Ovary (tissue), 10 donors: ENCODE measurements at regions of chr3 and their contacts with region 1.

Region 1: GRCh38 chr3:64685800-64686445 is 1.9 kb downstream of the ADAMTS9 start:
- DNase-seq: peak; percentile 97 to 98 (median 97)
- H3K4me3 ChIP-seq: peak overlapping the region; percentile 72
- H3K27ac ChIP-seq: peak overlapping the region; percentile 98 to 99
- H3K4me1 ChIP-seq: peaks cover 7% of the 10 kb centered on the region
- H3K27me3 ChIP-seq: no peaks in the 10 kb centered on the region
- CTCF ChIP-seq: peak; percentile 17 to 38 (median 27)
- EP300 ChIP-seq: no peak
- POLR2A ChIP-seq: peak; percentile 88

Region 2: DNA sequence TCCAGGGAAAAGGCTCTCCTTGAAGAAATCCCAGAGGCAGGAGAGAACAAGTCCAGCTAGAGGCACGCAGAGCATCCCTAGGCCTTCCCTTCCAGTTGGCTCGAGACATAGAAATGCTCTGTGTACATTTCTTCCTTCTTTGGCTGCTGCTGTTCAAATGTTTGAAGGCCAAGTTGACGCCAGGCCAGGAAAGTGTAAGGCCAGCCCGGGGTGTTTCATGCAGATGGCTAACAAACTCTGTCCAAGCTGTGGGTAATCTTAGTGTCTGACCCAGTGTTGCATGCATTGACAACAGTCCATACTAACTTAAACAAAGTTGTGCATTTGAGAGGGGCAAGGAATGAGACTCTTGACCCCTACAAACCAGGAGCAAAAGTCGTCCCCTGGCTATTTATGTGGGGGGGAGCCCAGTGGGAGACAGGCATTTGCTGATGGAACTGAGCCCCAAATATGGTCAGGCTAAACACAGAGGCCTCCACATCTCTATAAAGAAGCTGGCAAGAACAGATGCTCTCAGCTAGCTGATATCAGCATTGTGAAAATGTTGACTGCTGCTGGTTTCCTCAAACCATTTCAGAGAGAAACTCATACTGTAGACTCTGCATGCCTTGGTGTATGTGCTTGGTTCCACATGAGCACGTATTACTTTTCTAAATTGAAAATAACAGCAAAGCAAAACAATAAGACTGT is 137.6 kb before region 1 on chr3:
- intact Hi-C with region 1: loop called in 1 of 4 experiments (anchors 5 kb)
- DNase-seq: peak; percentile 79 to 89 (median 86)
- H3K4me3 ChIP-seq: no peak overlapping the region
- H3K27ac ChIP-seq: peak overlapping the region in 1 of 2 donors; percentile 59
- H3K4me1 ChIP-seq: peaks cover 8% of the 10 kb centered on the region
- H3K27me3 ChIP-seq: no peaks in the 10 kb centered on the region
- CTCF ChIP-seq: no peak
- EP300 ChIP-seq: no peak
- POLR2A ChIP-seq: no peak

Region 3: DNA sequence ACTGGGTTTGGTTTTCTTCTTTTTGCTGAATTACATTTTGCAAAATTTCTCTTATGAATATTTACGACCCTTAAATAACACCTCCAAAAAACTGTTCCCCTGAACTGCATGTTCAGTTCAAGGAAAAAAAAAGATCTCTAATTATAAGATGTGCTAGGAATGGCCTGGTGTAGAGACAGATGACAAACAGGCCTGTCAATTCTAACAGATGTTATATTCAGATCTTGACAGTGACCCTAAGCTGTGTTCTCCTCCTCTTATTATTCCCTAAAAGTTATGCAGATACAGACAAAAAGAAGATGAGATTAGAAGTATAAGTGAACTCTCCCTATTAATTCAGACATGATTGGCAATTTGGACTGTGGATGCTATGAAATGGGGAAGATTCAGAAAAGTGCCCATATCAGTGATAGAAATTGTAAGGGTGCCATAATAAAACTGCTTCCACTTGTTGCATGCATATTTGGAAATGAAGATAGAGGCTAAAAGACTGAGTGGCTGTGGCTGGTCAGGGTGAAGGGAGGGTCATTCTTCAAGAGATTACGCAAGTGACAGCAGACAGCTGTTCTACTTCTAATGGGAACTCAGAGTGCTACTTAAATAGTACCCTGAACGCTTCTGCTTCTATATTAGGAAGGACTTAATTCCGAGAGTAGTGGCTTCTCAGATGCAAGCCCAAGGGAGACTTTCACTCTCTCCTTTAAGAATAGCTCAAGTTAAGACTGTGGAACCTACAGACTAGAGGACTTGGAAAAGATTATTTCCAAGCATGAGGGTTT is 73.7 kb before region 1 on chr3:
- intact Hi-C with region 1: loop called in 2 of 4 experiments (anchors 10 kb)
- DNase-seq: peak in 2 of 5 donors; percentile 55 to 70
- H3K4me3 ChIP-seq: no peak overlapping the region
- H3K27ac ChIP-seq: peak overlapping the region in 1 of 2 donors; percentile 21
- H3K4me1 ChIP-seq: peaks cover 6% of the 10 kb centered on the region
- H3K27me3 ChIP-seq: no peaks in the 10 kb centered on the region
- CTCF ChIP-seq: no peak
- EP300 ChIP-seq: peak; percentile 67
- POLR2A ChIP-seq: no peak

Region 4: DNA sequence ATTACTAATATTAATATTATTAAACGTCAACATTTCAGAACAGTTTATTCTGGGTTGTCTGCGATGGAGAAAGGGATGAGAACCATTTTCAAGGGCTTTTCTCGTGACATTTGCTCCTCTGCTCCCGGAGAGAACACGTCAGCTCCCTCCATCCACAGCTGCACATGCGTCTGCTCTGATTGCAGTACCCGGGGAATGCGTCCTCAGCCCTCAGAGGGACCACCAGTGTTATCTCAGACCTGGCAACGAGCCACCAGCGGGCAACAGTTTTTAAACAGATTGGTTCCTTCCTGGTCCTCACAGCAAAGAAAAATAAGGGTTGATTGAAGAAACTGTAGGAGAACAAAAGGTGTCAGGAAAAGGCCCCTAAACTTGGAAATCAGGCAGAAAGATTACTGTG is 204.1 kb after region 1 on chr3:
- intact Hi-C with region 1: loop called in 1 of 4 experiments (anchors 5 kb)
- DNase-seq: peak; percentile 59 to 86 (median 69)
- H3K4me3 ChIP-seq: no peak overlapping the region
- H3K27ac ChIP-seq: peak overlapping the region in 1 of 2 donors; percentile 62
- H3K4me1 ChIP-seq: peaks cover 7% of the 10 kb centered on the region
- H3K27me3 ChIP-seq: no peaks in the 10 kb centered on the region
- CTCF ChIP-seq: no peak
- EP300 ChIP-seq: no peak
- POLR2A ChIP-seq: no peak

Region 5: DNA sequence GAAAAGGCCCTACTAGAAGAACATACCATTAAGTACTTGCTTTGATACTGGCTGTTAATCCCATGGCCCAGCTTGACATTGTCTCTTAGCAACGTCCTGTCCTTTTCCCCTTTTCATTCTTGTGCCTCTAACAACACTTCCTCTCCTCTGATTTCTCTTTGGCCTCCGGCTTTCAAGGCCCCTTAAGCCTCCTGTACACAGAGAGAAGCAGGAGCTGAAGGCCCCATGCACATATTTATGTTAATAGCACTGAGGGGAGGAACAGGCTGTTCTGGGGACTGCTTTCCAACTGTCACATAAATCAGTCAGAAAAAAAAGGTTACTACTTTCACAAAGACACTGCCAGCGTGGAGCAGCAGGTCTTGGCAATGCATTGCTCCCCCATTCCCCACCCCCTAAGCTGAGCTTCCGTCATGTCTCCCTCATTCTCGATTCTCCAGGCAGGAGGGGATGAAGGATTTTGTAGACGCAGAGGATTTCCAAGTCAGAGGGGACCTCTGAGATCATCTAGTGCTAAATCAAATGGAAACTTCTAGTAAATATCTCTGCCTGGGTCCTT is 259.3 kb after region 1 on chr3:
- intact Hi-C with region 1: loop called in 1 of 4 experiments (anchors 5 kb)
- DNase-seq: peak; percentile 28 to 56 (median 36)
- H3K4me3 ChIP-seq: no peak overlapping the region
- H3K27ac ChIP-seq: no peak overlapping the region
- H3K4me1 ChIP-seq: peaks cover 16% of the 10 kb centered on the region
- H3K27me3 ChIP-seq: no peaks in the 10 kb centered on the region
- CTCF ChIP-seq: no peak
- EP300 ChIP-seq: no peak
- POLR2A ChIP-seq: no peak

Region 6: GRCh38 chr3:65170390-65171042 is 484.6 kb after region 1 on chr3:
- intact Hi-C with region 1: loop called in 3 of 4 experiments (anchors 5 to 10 kb)
- DNase-seq: peak; percentile 71 to 90 (median 87)
- H3K4me3 ChIP-seq: no peak overlapping the region
- H3K27ac ChIP-seq: no peak overlapping the region
- H3K4me1 ChIP-seq: peaks cover 7% of the 10 kb centered on the region
- H3K27me3 ChIP-seq: no peaks in the 10 kb centered on the region
- CTCF ChIP-seq: peak in 2 of 3 donors; percentile 17 to 39
- EP300 ChIP-seq: peak; percentile 100
- POLR2A ChIP-seq: no peak